ENCODE measurements at regions of chr13 and their contacts with region 1.

Region 1: GRCh38 chr13:72839831-72840426 is 58.0 kb downstream of the PIBF1 start:
- DNase-seq: peak in 13 of 14 experiments; percentile 6 to 62 (median 20)
- ATAC-seq: peak; percentile 61
- H3K4me3 ChIP-seq: no peak overlapping the region
- H3K4me3 Mint-ChIP-seq: no peak overlapping the region
- H3K27ac ChIP-seq: no peak overlapping the region
- H3K27ac Mint-ChIP-seq: no peak overlapping the region
- H3K4me1 ChIP-seq: no peaks in the 10 kb centered on the region
- H3K4me1 Mint-ChIP-seq: no peaks in the 10 kb centered on the region
- H3K27me3 ChIP-seq: no peaks in the 10 kb centered on the region
- H3K27me3 Mint-ChIP-seq: no peaks in the 10 kb centered on the region
- CTCF ChIP-seq: peak; percentile 61

Region 2: GRCh38 chr13:72804302-72804701 is 35.6 kb before region 1 on chr13:
- CTCF ChIA-PET with region 1: no interaction called
- POLR2A ChIA-PET with region 1: no interaction called
- intact Hi-C with region 1: no loop called
- DNase-seq: no peak
- ATAC-seq: no peak
- H3K4me3 ChIP-seq: no peak overlapping the region
- H3K4me3 Mint-ChIP-seq: no peak overlapping the region
- H3K27ac ChIP-seq: no peak overlapping the region
- H3K27ac Mint-ChIP-seq: peak overlapping the region; percentile 54
- H3K4me1 ChIP-seq: no peaks in the 10 kb centered on the region
- H3K4me1 Mint-ChIP-seq: peaks cover 5% of the 10 kb centered on the region
- H3K27me3 ChIP-seq: no peaks in the 10 kb centered on the region
- H3K27me3 Mint-ChIP-seq: no peaks in the 10 kb centered on the region
- CTCF ChIP-seq: no peak

Region 3: GRCh38 chr13:73417015-73417623 is 577.2 kb after region 1 on chr13:
- CTCF ChIA-PET with region 1: no interaction called
- POLR2A ChIA-PET with region 1: no interaction called
- intact Hi-C with region 1: loop called in 1 of 2 experiments (anchors 10 kb)
- DNase-seq: no peak
- ATAC-seq: no peak
- H3K4me3 ChIP-seq: no peak overlapping the region
- H3K4me3 Mint-ChIP-seq: no peak overlapping the region
- H3K27ac ChIP-seq: no peak overlapping the region
- H3K27ac Mint-ChIP-seq: no peak overlapping the region
- H3K4me1 ChIP-seq: no peaks in the 10 kb centered on the region
- H3K4me1 Mint-ChIP-seq: no peaks in the 10 kb centered on the region
- H3K27me3 ChIP-seq: no peaks in the 10 kb centered on the region
- H3K27me3 Mint-ChIP-seq: no peaks in the 10 kb centered on the region
- CTCF ChIP-seq: no peak

Measured in CD4-positive, alpha-beta T cell (primary cell).